ENCODE measurements at regions of chr2 and their contacts with region 1.

Region 1: DNA sequence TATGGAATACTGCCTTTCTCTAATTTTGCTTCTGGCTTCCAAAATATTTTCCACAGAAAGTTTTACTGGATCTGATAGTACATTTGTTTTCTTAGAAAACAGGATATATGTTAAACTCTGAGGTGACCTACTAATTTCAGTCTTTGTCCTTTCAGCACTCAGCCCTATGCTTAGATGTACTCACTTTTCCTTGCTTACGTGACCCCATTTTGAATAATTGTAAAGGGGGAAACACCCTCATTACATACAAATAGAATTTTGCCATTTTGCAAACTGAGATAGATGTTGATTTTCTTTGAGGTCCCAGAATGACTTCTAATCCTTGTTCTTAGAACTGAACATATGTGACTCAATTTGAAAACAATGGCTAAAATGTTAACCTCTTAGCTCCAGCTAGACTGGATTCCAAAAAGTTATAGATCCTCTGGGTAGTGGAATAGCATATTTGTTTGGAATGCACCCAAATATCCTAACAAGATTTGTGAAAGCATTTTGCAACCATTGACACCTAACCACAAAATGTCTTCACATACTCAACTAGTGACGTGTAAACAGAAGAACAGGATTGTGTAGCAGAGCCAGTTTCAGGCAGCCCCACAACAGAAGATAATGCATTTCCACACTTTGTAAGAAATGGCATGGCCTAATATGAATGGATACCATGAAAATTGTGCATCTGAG is 44.8 kb upstream of the EHBP1 start:
- DNase-seq: peak; percentile 51 to 97
- H3K4me3 ChIP-seq: peak overlapping the region; percentile 8; the same call in 1 of the 2 replicates
- H3K27ac ChIP-seq: peak overlapping the region; percentile 80
- H3K4me1 ChIP-seq: peaks cover 62% of the 10 kb centered on the region
- H3K27me3 ChIP-seq: no peaks in the 10 kb centered on the region
- CTCF ChIP-seq: no peak

Region 2: GRCh38 chr2:62577994-62578781 is 82.5 kb before region 1 on chr2:
- CTCF ChIA-PET with region 1: no interaction called
- POLR2A ChIA-PET with region 1: interaction called, 5 read pairs
- intact Hi-C with region 1: loop called (anchors 2 kb)
- DNase-seq: peak; percentile 45 to 98
- H3K4me3 ChIP-seq: peak overlapping the region; percentile 24; the same call in 1 of the 2 replicates
- H3K27ac ChIP-seq: peak overlapping the region; percentile 99
- H3K4me1 ChIP-seq: peaks cover 41% of the 10 kb centered on the region
- H3K27me3 ChIP-seq: no peaks in the 10 kb centered on the region
- CTCF ChIP-seq: no peak

Region 3: DNA sequence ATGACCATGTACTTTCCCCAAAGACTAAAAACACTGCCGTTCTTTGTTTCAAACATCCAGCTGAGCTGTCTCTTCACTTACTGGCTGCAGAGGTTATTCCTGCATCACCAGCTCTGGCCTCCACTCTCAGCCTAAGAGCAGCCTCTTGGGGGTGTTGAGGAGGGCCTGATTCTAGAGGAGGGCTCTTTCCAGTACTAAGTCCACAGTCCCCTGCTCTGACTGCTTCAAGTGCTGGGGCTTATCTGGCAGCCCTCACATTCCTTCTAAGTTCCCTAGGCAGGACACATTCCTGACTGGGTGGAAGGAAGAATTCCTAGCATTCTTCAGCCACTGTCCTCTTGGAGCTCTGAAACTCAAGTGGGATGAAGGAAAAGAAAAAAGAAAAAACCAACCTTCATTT is 11.9 kb after region 1 on chr2:
- CTCF ChIA-PET with region 1: no interaction called
- POLR2A ChIA-PET with region 1: no interaction called
- intact Hi-C with region 1: loop called (anchors 1 kb)
- DNase-seq: peak; percentile 54 to 58
- H3K4me3 ChIP-seq: no peak overlapping the region
- H3K27ac ChIP-seq: no peak overlapping the region
- H3K4me1 ChIP-seq: peaks cover 9% of the 10 kb centered on the region
- H3K27me3 ChIP-seq: no peaks in the 10 kb centered on the region
- CTCF ChIP-seq: no peak